AG04450 (cell line): ENCODE measurements at regions of chr2 and their contacts with region 1.

Region 1: GRCh38 chr2:26136451-26136850 is 36.4 kb upstream of the GAREM2 start:
- DNase-seq: no peak
- H3K4me3 ChIP-seq: no peak overlapping the region
- H3K27ac ChIP-seq: no peak overlapping the region
- H3K27me3 ChIP-seq: no peaks in the 10 kb centered on the region
- CTCF ChIP-seq: no peak

Region 2: DNA sequence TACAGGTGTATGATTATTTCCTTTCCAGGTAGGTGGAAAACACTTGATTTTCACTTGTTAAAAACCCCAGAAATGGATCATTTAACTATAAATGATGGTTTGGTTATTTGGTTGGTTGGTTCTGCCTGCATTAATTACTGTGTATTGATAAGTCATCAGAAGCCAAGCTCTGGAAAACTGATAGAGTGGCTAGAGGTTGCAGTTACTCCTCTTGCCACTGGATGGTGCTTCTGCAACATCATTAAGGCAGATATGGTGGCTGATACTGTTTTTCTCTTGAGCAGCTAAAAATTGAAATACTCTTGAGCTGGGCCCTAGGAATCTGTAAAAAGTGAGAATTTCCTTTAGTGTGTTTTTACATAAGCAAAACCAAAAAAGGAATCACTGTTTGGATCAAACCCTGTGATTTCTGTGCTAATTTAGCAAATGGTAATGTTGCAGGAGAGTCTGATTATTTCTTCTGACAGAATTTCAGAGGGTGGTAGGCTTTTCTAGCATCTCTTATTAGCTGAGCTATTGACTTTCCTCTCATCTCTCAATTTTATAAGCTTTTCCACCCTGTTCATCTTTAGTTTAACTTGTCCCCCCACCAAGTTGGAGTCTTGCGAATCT is 48.3 kb before region 1 on chr2:
- CTCF ChIA-PET with region 1: interaction called, 10 read pairs
- POLR2A ChIA-PET with region 1: no interaction called
- DNase-seq: no peak
- H3K4me3 ChIP-seq: no peak overlapping the region
- H3K27ac ChIP-seq: no peak overlapping the region
- H3K27me3 ChIP-seq: no peaks in the 10 kb centered on the region
- CTCF ChIP-seq: peak; percentile 79

Region 3: DNA sequence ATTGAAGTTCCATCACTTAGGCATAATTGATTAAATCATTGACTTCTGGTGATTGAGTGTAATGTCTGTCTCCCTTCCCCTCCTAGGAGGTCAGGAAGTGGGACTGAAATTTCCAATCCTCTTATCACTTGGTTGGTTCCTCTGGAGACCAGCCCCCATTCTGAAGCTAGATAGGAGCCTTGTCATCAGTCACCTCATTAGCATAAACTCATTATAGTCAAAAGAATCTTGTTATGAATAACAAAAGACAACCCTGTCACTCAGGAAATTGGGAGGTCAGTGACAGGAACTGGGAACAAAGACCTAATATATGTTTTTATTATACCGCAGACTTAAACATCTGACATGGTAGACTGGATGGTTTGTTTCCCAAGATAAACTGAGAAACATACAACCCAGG is 24.2 kb before region 1 on chr2:
- CTCF ChIA-PET with region 1: no interaction called
- POLR2A ChIA-PET with region 1: no interaction called
- DNase-seq: no peak
- H3K4me3 ChIP-seq: no peak overlapping the region
- H3K27ac ChIP-seq: no peak overlapping the region
- H3K27me3 ChIP-seq: no peaks in the 10 kb centered on the region
- CTCF ChIP-seq: no peak

Region 4: GRCh38 chr2:26122630-26123029 is 13.8 kb before region 1 on chr2:
- CTCF ChIA-PET with region 1: no interaction called
- POLR2A ChIA-PET with region 1: no interaction called
- DNase-seq: no peak
- H3K4me3 ChIP-seq: no peak overlapping the region
- H3K27ac ChIP-seq: no peak overlapping the region
- H3K27me3 ChIP-seq: no peaks in the 10 kb centered on the region
- CTCF ChIP-seq: no peak